GM12878 (cell line): ENCODE measurements at regions of chr5 and their contacts with region 1.

Region 1: DNA sequence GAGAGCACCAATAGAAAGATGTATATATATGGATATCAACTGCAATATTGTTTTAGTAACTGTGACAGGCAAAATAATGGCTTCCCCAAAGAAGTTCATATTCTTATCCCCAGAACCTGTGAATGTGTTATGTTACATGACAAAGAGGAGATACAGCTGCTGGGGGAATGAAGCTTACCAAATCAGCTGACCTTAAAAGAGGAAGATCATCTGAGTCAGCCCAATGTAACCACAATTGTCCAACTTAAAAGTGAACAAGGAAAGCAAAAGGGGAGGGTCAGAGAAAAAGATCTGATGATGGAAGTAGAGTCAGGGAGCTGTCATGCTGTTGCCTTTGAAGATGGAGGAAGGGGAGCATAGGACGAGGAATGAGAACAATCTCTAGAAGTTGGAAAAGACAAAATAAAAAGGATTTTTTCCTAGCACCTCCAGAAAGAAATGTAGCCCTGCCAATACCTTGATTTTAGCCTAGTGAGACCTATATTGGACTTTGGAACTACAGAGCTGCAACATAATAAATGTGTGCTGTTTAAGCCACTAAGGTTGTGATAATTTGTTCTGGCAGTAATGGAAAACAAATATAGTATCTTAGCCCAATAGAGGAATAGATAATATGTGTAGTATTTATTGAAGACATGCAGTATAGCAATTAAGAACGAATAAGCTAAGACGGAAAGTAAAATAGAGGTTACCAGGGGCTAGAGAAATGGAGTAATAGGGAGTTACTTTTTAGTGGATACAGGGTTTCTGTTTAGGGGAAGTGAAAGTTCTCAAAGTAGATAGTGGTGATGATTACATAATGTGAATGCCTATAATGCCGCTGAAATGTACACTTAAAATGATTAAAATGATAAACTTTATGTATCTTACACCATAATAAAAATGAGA is 115.9 kb downstream of the PIK3R1 start:
- DNase-seq: no peak
- ATAC-seq: peak; percentile 97
- H3K4me3 ChIP-seq: no peak overlapping the region
- H3K27ac ChIP-seq: no peak overlapping the region
- H3K4me1 ChIP-seq: peaks cover 11% of the 10 kb centered on the region
- H3K27me3 ChIP-seq: no peaks in the 10 kb centered on the region
- CTCF ChIP-seq: no peak
- EP300 ChIP-seq: peak in 1 of 2 experiments; percentile 63; a peak in 1 of 4 replicates
- POLR2A ChIP-seq: no peak
- RAD21 ChIP-seq: no peak

Region 2: DNA sequence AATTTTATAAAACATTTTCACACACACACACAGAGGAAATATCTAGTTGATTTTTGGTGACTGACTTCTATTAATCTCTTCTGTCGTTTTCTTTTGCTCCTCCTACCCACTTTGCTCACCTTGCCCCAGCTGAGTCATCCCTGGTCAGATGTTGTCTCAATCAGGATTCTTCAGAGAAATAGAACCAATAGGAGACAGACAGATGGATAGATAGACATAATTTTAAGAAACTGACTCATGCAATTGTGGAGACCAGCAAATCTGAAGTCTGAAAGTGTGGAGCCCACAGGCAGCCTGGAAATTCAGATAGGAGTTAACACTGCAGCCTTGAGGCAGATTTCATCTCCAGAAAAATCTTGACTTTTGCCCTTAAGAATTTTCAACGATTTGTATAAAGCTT is 152.9 kb before region 1 on chr5:
- CTCF ChIA-PET with region 1: no interaction called
- POLR2A ChIA-PET with region 1: no interaction called
- RAD21 ChIA-PET with region 1: no interaction called
- SMC1A ChIA-PET with region 1: no interaction called
- in situ Hi-C with region 1: no loop called
- intact Hi-C with region 1: no loop called
- DNase-seq: no peak
- ATAC-seq: no peak
- H3K4me3 ChIP-seq: no peak overlapping the region
- H3K27ac ChIP-seq: no peak overlapping the region
- H3K4me1 ChIP-seq: no peaks in the 10 kb centered on the region
- H3K27me3 ChIP-seq: no peaks in the 10 kb centered on the region
- CTCF ChIP-seq: no peak
- EP300 ChIP-seq: no peak
- POLR2A ChIP-seq: no peak
- RAD21 ChIP-seq: no peak

Region 3: GRCh38 chr5:68239487-68239886 is 91.9 kb before region 1 on chr5:
- CTCF ChIA-PET with region 1: no interaction called
- POLR2A ChIA-PET with region 1: no interaction called
- RAD21 ChIA-PET with region 1: no interaction called
- SMC1A ChIA-PET with region 1: no interaction called
- in situ Hi-C with region 1: no loop called
- intact Hi-C with region 1: no loop called
- DNase-seq: no peak
- ATAC-seq: peak; percentile 94
- H3K4me3 ChIP-seq: no peak overlapping the region
- H3K27ac ChIP-seq: no peak overlapping the region; the same call in 1 of the 2 replicates
- H3K4me1 ChIP-seq: peaks cover 19% of the 10 kb centered on the region; the same call in 1 of the 2 replicates
- H3K27me3 ChIP-seq: no peaks in the 10 kb centered on the region
- CTCF ChIP-seq: no peak
- EP300 ChIP-seq: peak in 1 of 2 experiments; percentile 42; a peak in 1 of 4 replicates
- POLR2A ChIP-seq: no peak
- RAD21 ChIP-seq: no peak

Region 4: GRCh38 chr5:68303038-68303738 is 28.2 kb before region 1 on chr5:
- CTCF ChIA-PET with region 1: no interaction called
- POLR2A ChIA-PET with region 1: no interaction called
- RAD21 ChIA-PET with region 1: interaction called, 3 read pairs
- SMC1A ChIA-PET with region 1: interaction called, 23 read pairs
- in situ Hi-C with region 1: no loop called
- intact Hi-C with region 1: no loop called
- DNase-seq: peak; percentile 55
- ATAC-seq: peak; percentile 73
- H3K4me3 ChIP-seq: no peak overlapping the region
- H3K27ac ChIP-seq: no peak overlapping the region
- H3K4me1 ChIP-seq: peaks cover 13% of the 10 kb centered on the region; the same call in 1 of the 2 replicates
- H3K27me3 ChIP-seq: no peaks in the 10 kb centered on the region
- CTCF ChIP-seq: no peak
- EP300 ChIP-seq: no peak
- POLR2A ChIP-seq: no peak
- RAD21 ChIP-seq: no peak

Region 5: DNA sequence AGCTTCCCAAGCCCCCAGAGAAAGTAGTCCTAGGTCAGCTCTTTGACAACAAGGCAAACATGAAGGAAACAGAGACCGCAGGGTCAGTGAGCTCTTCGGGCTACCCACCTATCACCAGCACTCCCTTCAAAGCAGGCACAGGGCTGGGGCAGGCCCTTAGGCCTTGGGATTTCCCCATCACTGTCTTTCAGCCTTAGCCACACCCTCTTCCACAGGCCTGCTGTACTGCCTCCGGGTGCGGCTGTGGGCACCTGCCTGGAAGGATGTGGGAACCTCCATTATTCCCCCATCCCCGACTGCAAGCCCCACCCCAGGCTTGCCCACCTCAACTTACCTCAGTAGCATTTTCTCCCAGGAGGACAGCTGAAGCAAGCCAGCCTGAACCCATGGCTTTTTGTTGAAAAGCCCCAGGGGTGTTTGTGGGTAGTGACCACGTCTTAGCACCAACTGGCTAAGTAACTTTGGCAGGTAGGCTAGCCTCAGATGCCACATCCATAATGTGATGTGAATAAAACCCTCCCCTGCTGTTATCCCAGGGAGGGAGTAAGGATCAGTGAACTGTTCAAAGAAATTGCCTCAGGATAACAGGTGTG is 15.7 kb before region 1 on chr5:
- CTCF ChIA-PET with region 1: interaction called, 4 read pairs
- POLR2A ChIA-PET with region 1: interaction called, 5 read pairs
- RAD21 ChIA-PET with region 1: interaction called, 17 read pairs
- SMC1A ChIA-PET with region 1: interaction called, 34 read pairs
- in situ Hi-C with region 1: no loop called
- intact Hi-C with region 1: no loop called
- DNase-seq: peak; percentile 55
- ATAC-seq: peak; percentile 100
- H3K4me3 ChIP-seq: no peak overlapping the region
- H3K27ac ChIP-seq: no peak overlapping the region
- H3K4me1 ChIP-seq: peaks cover 13% of the 10 kb centered on the region
- H3K27me3 ChIP-seq: no peaks in the 10 kb centered on the region
- CTCF ChIP-seq: no peak
- EP300 ChIP-seq: 0 out of 4 replicates have a peak, but pooled peaks of 1 of the 2 experiments have one; percentile 28
- POLR2A ChIP-seq: no peak
- RAD21 ChIP-seq: no peak

Region 6: DNA sequence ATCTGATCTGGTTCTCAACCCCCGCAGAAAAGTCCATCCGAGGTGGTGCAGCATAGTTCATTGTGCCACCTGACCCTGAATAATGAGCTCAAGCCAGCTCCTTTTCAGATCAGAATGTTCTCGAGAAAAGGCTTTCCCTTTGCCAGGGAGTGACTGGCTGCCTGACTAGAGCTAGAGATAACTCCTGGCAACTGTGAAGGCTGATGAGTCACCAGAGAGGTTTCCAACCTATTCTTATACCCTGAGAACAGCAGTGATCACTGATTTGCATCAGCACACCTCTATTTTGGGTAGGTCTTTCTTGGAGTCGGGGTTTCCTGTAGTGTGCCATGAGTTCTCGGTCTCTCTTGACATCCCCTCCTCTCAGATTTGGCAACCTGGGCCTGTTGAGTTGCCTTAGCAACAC is 12.0 kb after region 1 on chr5:
- CTCF ChIA-PET with region 1: interaction called, 6 read pairs
- POLR2A ChIA-PET with region 1: interaction called, 3 read pairs
- RAD21 ChIA-PET with region 1: interaction called, 27 read pairs
- SMC1A ChIA-PET with region 1: interaction called, 13 read pairs
- in situ Hi-C with region 1: no loop called
- intact Hi-C with region 1: no loop called
- DNase-seq: peak; percentile 55
- ATAC-seq: peak; percentile 83
- H3K4me3 ChIP-seq: no peak overlapping the region
- H3K27ac ChIP-seq: no peak overlapping the region
- H3K4me1 ChIP-seq: peaks cover 21% of the 10 kb centered on the region
- H3K27me3 ChIP-seq: no peaks in the 10 kb centered on the region
- CTCF ChIP-seq: no peak
- EP300 ChIP-seq: no peak
- POLR2A ChIP-seq: no peak
- RAD21 ChIP-seq: no peak

Region 7: DNA sequence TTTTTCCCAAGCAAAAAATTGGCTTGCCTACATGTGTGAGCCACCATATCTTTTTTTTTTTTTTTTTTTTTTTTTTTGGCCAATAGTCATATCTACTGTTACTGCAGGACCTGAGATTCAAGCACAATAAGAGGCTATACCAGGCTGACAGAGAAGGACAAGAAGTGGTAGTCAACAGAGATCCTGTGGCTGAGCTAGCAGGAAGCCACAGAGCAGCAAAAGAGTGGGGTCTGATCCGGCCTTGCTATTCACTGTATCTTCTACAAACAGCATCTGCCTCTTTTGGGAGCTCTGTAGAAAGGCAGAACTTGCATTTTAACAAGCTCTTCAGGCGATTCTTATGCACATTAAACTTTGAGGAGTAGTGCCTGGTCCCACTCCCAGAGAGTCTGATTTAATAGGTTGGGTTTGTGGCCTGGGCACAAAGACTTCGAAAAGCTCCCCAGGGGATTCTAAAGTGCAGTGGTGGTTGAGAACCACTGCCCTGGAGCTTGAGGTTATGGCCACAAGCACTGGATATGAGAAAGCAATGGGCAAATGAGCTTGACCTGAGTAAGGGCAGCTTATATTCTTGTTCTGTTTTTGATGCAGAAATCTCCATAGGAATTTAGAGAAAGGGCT is 46.9 kb after region 1 on chr5:
- CTCF ChIA-PET with region 1: interaction called, 3 read pairs
- POLR2A ChIA-PET with region 1: no interaction called
- RAD21 ChIA-PET with region 1: interaction called, 8 read pairs
- SMC1A ChIA-PET with region 1: interaction called, 17 read pairs
- in situ Hi-C with region 1: no loop called
- intact Hi-C with region 1: no loop called
- DNase-seq: peak; percentile 55
- ATAC-seq: peak; percentile 90
- H3K4me3 ChIP-seq: no peak overlapping the region
- H3K27ac ChIP-seq: peak overlapping the region; percentile 15; the same call in 1 of the 2 replicates
- H3K4me1 ChIP-seq: peaks cover 22% of the 10 kb centered on the region
- H3K27me3 ChIP-seq: no peaks in the 10 kb centered on the region; a peak in 1 of 4 replicates
- CTCF ChIP-seq: no peak
- EP300 ChIP-seq: no peak
- POLR2A ChIP-seq: no peak
- RAD21 ChIP-seq: no peak

Region 8: DNA sequence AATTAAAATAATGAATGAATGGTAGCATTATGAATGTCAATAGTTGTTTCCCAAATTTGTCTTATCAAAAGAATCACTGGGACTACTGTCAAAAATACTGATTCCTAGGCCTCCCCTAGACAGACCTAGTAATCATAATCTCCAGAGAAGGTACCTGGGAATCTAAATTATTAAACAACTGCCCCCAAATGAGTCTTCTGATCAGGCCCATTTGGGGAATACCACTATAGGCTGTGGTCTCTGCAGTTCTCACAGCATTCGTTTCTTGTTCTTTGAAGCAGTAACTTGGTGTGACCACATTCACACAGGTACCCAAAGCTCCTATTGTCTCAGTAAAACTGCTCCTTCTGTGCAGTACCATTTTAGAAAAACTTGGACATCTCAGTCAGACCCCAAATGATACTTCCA is 115.1 kb after region 1 on chr5:
- CTCF ChIA-PET with region 1: no interaction called
- POLR2A ChIA-PET with region 1: interaction called, 3 read pairs
- RAD21 ChIA-PET with region 1: interaction called, 12 read pairs
- SMC1A ChIA-PET with region 1: interaction called, 7 read pairs
- in situ Hi-C with region 1: no loop called
- intact Hi-C with region 1: no loop called
- DNase-seq: peak; percentile 87
- ATAC-seq: peak; percentile 94
- H3K4me3 ChIP-seq: no peak overlapping the region
- H3K27ac ChIP-seq: peak overlapping the region; percentile 77
- H3K4me1 ChIP-seq: peaks cover 21% of the 10 kb centered on the region
- H3K27me3 ChIP-seq: no peaks in the 10 kb centered on the region
- CTCF ChIP-seq: no peak
- EP300 ChIP-seq: peak; percentile 60 to 84; a peak in 3 of 4 replicates
- POLR2A ChIP-seq: no peak
- RAD21 ChIP-seq: peak; percentile 34